Right ventricle myocardium inferior (tissue), 1 donor: ENCODE measurements at regions of chr10 and their contacts with region 1.

Region 1: DNA sequence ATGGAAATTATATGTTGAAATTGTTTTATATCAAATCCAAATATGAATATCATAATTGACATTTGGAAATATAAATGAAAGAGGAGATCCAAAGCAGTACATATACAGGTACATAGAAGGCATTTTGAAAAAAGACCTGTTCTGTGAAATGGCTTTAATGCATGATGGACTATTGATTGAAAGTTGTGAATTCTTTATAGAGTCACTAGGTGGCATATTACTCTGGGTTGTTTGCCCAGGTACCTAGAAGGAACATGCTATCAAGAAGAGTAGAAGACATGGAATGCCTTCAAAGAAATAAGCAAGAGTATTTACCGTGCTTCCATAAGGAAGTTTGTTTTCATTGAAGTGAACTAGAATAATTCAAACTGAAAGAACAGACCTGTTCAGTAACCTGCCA is 160.0 kb upstream of the ANK3 start:
- DNase-seq: no peak
- ATAC-seq: no peak

Region 2: GRCh38 chr10:60618861-60619260 is 69.2 kb after region 1 on chr10:
- intact Hi-C with region 1: loop called (anchors 5 kb)
- DNase-seq: no peak
- ATAC-seq: no peak